Caco-2 (cell line): ENCODE measurements at regions of chr2 and their contacts with region 1.

Region 1: GRCh38 chr2:230987137-230988020 is 8.5 kb upstream of the SPATA3 start:
- DNase-seq: peak; percentile 80 to 86
- H3K4me3 ChIP-seq: peak overlapping the region; percentile 39
- H3K4me3 Mint-ChIP-seq: peak overlapping the region; percentile 64
- H3K27ac Mint-ChIP-seq: peak overlapping the region; percentile 42
- H3K4me1 ChIP-seq: peaks cover 3% of the 10 kb centered on the region; the same call in 1 of the 2 replicates
- H3K4me1 Mint-ChIP-seq: peaks cover 6% of the 10 kb centered on the region
- H3K27me3 ChIP-seq: no peaks in the 10 kb centered on the region
- H3K27me3 Mint-ChIP-seq: no peaks in the 10 kb centered on the region
- CTCF ChIP-seq: peak; percentile 48 to 83

Region 2: DNA sequence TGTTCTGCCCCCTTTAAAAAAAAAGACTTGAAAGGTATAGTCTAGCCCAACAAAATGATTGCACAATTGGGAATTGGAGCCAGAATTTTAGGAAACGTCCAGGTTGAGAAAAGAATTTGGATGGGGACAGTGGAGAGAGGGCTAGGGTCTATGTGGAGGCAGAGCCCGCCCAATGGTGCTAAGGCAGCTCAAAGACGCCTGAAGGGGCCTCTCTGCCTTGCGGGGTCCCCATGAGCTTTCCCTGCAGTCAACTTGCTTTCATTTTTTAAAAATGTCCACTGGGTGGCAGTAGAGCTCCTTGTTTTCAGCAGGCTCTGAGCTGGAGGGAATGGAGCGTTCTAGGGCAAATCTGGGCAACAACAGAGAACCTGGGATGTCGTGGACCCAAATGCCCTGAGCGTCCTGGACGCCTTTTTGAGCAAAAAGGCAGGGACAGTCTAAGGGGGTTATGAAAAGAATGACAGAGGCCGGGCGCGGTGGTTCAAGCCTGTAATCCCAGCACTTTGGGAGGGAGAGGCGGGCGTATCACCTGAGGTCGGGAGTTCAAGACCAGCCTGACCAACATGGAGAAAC is 162.9 kb before region 1 on chr2:
- CTCF ChIA-PET with region 1: interaction called, 25 read pairs
- POLR2A ChIA-PET with region 1: interaction called, 3 read pairs
- intact Hi-C with region 1: loop called (anchors 1 kb)
- DNase-seq: peak; percentile 72 to 77
- H3K4me3 ChIP-seq: no peak overlapping the region
- H3K4me3 Mint-ChIP-seq: no peak overlapping the region
- H3K27ac Mint-ChIP-seq: no peak overlapping the region
- H3K4me1 ChIP-seq: no peaks in the 10 kb centered on the region
- H3K4me1 Mint-ChIP-seq: no peaks in the 10 kb centered on the region
- H3K27me3 ChIP-seq: no peaks in the 10 kb centered on the region
- H3K27me3 Mint-ChIP-seq: no peaks in the 10 kb centered on the region
- CTCF ChIP-seq: peak; percentile 51 to 60

Region 3: GRCh38 chr2:230902180-230902899 is 85.0 kb before region 1 on chr2:
- CTCF ChIA-PET with region 1: interaction called, 17 read pairs
- POLR2A ChIA-PET with region 1: no interaction called
- intact Hi-C with region 1: loop called (anchors 1 kb)
- DNase-seq: peak; percentile 61 to 62
- H3K4me3 ChIP-seq: no peak overlapping the region
- H3K4me3 Mint-ChIP-seq: no peak overlapping the region
- H3K27ac Mint-ChIP-seq: no peak overlapping the region
- H3K4me1 ChIP-seq: no peaks in the 10 kb centered on the region
- H3K4me1 Mint-ChIP-seq: peaks cover 8% of the 10 kb centered on the region
- H3K27me3 ChIP-seq: no peaks in the 10 kb centered on the region
- H3K27me3 Mint-ChIP-seq: no peaks in the 10 kb centered on the region
- CTCF ChIP-seq: peak; percentile 73 to 86

Region 4: GRCh38 chr2:230942920-230943896 is 44.2 kb before region 1 on chr2:
- CTCF ChIA-PET with region 1: interaction called, 3 read pairs
- POLR2A ChIA-PET with region 1: no interaction called
- intact Hi-C with region 1: loop called (anchors 5 kb)
- DNase-seq: no peak
- H3K4me3 ChIP-seq: no peak overlapping the region
- H3K4me3 Mint-ChIP-seq: no peak overlapping the region
- H3K27ac Mint-ChIP-seq: no peak overlapping the region
- H3K4me1 ChIP-seq: no peaks in the 10 kb centered on the region
- H3K4me1 Mint-ChIP-seq: no peaks in the 10 kb centered on the region
- H3K27me3 ChIP-seq: no peaks in the 10 kb centered on the region
- H3K27me3 Mint-ChIP-seq: no peaks in the 10 kb centered on the region
- CTCF ChIP-seq: no peak

Region 5: GRCh38 chr2:230953845-230954244 is 33.5 kb before region 1 on chr2:
- CTCF ChIA-PET with region 1: no interaction called
- POLR2A ChIA-PET with region 1: no interaction called
- intact Hi-C with region 1: no loop called
- DNase-seq: no peak
- H3K4me3 ChIP-seq: no peak overlapping the region
- H3K4me3 Mint-ChIP-seq: no peak overlapping the region
- H3K27ac Mint-ChIP-seq: no peak overlapping the region
- H3K4me1 ChIP-seq: 0 out of 2 replicates have a peak, but pooled peaks cover 6% of the 10 kb centered on the region
- H3K4me1 Mint-ChIP-seq: peaks cover 4% of the 10 kb centered on the region
- H3K27me3 ChIP-seq: no peaks in the 10 kb centered on the region
- H3K27me3 Mint-ChIP-seq: no peaks in the 10 kb centered on the region
- CTCF ChIP-seq: no peak

Region 6: GRCh38 chr2:231052494-231053451 is 65.4 kb after region 1 on chr2:
- CTCF ChIA-PET with region 1: interaction called, 6 read pairs
- POLR2A ChIA-PET with region 1: interaction called, 4 read pairs
- intact Hi-C with region 1: loop called (anchors 1 kb)
- DNase-seq: peak; percentile 82 to 86
- H3K4me3 ChIP-seq: peak overlapping the region; percentile 50
- H3K4me3 Mint-ChIP-seq: peak overlapping the region; percentile 85
- H3K27ac Mint-ChIP-seq: peak overlapping the region; percentile 73
- H3K4me1 ChIP-seq: peaks cover 41% of the 10 kb centered on the region
- H3K4me1 Mint-ChIP-seq: no peaks in the 10 kb centered on the region
- H3K27me3 ChIP-seq: no peaks in the 10 kb centered on the region
- H3K27me3 Mint-ChIP-seq: no peaks in the 10 kb centered on the region
- CTCF ChIP-seq: peak; percentile 66 to 77